ENCODE measurements at regions of chrX and their contacts with region 1.

Region 1: DNA sequence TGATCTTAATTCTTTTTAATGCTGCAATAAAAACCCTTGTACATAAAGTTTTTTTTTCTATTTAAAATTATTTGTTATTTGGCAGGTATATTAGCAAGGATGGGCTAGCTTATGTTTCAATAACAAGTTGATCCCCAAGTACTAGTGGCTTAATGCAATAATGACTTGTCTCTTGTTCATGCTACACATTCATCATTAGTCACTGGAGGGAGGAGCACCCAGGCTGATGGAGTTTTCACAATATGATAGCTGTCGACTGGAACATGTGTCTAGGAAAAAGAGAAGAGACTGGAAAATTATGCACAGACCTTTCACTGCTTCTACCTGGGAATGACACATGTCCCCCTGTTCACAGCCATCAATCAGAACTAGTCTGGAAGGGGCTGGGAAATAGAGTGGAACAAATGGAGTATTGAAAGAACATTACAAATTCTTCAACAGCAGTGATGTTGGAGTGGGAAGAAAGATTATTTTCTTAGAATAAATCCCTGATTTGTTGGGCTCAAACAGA is 387.9 kb upstream of the RPS6KA3 start:
- DNase-seq: no peak
- ATAC-seq: no peak
- H3K4me3 ChIP-seq: no peak overlapping the region
- H3K27ac ChIP-seq: no peak overlapping the region
- H3K4me1 ChIP-seq: no peaks in the 10 kb centered on the region
- H3K27me3 ChIP-seq: no peaks in the 10 kb centered on the region
- CTCF ChIP-seq: no peak
- EP300 ChIP-seq: no peak
- POLR2A ChIP-seq: no peak
- RAD21 ChIP-seq: no peak

Region 2: DNA sequence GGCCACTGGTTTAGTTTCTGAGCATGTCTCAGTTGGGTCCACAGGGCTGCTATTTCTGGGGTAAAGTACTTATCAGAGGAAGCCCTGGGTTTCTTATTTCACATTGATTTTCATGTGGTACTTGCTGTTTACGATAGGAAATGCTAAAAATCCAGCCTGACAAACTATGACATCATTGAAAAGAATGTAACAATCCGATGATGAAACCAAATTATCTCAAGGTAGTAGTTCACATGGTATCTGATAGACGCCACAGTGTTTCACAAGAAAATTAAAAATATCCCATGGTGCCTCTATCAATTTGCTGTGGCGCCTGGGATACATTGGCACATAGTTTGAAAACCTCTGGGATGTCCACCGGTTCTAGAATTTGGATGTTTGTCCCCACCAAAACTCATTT is 31.0 kb after region 1 on chrX:
- CTCF ChIA-PET with region 1: no interaction called
- POLR2A ChIA-PET with region 1: no interaction called
- RAD21 ChIA-PET with region 1: no interaction called
- SMC1A ChIA-PET with region 1: no interaction called
- in situ Hi-C with region 1: no loop called
- intact Hi-C with region 1: loop called (anchors 1 kb)
- DNase-seq: no peak
- ATAC-seq: no peak
- H3K4me3 ChIP-seq: no peak overlapping the region
- H3K27ac ChIP-seq: no peak overlapping the region
- H3K4me1 ChIP-seq: no peaks in the 10 kb centered on the region
- H3K27me3 ChIP-seq: no peaks in the 10 kb centered on the region
- CTCF ChIP-seq: no peak
- EP300 ChIP-seq: no peak
- POLR2A ChIP-seq: no peak
- RAD21 ChIP-seq: no peak

Region 3: DNA sequence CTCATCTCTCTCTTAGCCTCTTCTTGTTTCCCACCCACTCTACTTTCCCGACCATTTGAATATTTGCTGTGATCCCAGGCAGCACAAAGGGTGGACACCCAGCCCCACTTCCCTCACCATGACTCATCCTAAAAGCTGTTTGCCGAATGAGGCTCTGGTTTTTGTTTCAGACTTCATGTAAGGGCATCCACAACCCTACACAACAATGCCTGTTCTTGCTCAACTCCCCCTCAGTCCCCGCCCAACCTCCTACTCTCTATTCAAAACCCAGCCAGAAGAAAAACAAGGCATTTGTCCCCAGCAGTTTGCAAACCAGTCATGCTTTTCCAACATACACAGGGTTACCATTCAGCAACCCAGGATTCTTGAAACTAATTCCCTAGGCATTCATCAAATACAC is 203.1 kb after region 1 on chrX:
- CTCF ChIA-PET with region 1: no interaction called
- POLR2A ChIA-PET with region 1: no interaction called
- RAD21 ChIA-PET with region 1: no interaction called
- SMC1A ChIA-PET with region 1: no interaction called
- in situ Hi-C with region 1: no loop called
- intact Hi-C with region 1: no loop called
- DNase-seq: no peak
- ATAC-seq: no peak
- H3K4me3 ChIP-seq: no peak overlapping the region
- H3K27ac ChIP-seq: no peak overlapping the region
- H3K4me1 ChIP-seq: no peaks in the 10 kb centered on the region
- H3K27me3 ChIP-seq: no peaks in the 10 kb centered on the region
- CTCF ChIP-seq: no peak
- EP300 ChIP-seq: no peak
- POLR2A ChIP-seq: no peak
- RAD21 ChIP-seq: no peak